Heart left ventricle (tissue), 16 donors: ENCODE measurements at regions of chr7 and their contacts with region 1.

Region 1: DNA sequence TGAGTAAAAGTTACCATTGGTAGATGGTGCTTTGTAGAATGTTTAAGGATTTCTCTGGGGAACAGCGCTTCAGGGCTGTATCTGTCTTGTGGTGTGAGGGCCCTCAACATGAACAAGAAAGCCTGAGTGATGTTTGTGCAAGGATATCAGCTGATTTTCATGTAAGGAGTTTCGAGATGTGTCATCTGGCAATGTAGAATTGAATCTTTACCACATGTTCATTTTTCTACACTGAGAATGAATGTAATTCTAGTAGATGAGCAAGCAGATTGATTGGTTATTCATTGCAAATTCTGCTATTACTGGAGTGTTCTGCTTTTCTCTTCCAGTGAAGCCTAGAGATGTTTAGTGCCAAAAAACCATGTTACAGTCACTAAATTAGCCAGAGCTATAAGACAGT is 87.7 kb downstream of the ST7 start:
- DNase-seq: no peak
- ATAC-seq: no peak
- H3K4me3 ChIP-seq: no peak overlapping the region
- H3K27ac ChIP-seq: no peak overlapping the region
- H3K4me1 ChIP-seq: peaks cover 0 to 30% (median 15%) of the 10 kb centered on the region in 12 donors
- H3K27me3 ChIP-seq: no peaks in the 10 kb centered on the region
- CTCF ChIP-seq: no peak
- POLR2A ChIP-seq: no peak

Region 2: DNA sequence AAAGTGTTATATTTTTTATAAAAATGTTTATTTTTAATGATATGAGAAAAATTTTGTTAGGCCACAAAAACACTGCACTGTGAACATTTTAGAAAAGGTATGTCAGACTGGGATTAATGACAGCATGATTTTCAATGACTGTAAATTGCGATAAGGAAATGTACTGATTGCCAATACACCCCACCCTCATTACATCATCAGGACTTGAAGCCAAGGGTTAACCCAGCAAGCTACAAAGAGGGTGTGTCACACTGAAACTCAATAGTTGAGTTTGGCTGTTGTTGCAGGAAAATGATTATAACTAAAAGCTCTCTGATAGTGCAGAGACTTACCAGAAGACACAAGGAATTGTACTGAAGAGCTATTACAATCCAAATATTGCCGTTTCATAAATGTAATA is 243.4 kb before region 1 on chr7:
- intact Hi-C with region 1: no loop called
- DNase-seq: no peak
- ATAC-seq: peak in 3 of 4 donors; percentile 46 to 62 (median 46)
- H3K4me3 ChIP-seq: no peak overlapping the region
- H3K27ac ChIP-seq: peak overlapping the region in 1 of 12 donors; percentile 32
- H3K4me1 ChIP-seq: peaks cover 0 to 11% (median 0%) of the 10 kb centered on the region in 12 donors
- H3K27me3 ChIP-seq: no peaks in the 10 kb centered on the region
- CTCF ChIP-seq: no peak
- POLR2A ChIP-seq: no peak

Region 3: DNA sequence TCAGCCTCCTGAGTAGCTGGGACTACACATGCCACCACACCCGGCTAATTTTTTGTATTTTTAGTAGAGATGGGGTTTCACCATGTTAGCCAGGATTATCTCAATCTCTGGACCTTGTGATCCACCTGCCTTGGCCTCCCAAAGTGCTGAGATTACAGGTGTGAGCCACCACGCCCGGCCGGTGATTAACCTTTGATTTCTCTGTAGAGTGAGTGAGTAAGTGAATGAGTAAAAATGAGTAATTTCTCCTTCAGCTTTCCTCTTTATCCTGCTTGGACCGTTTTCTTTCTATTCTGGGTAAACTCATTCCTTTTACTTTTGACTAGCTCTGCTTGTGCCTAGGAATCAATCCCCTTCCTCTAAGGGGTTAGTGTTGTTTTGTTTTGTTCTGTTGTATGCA is 51.0 kb before region 1 on chr7:
- intact Hi-C with region 1: loop called in 1 of 10 experiments (anchors 5 kb)
- DNase-seq: no peak
- ATAC-seq: no peak
- H3K4me3 ChIP-seq: no peak overlapping the region
- H3K27ac ChIP-seq: no peak overlapping the region
- H3K4me1 ChIP-seq: peaks cover 0 to 15% (median 0%) of the 10 kb centered on the region in 12 donors
- H3K27me3 ChIP-seq: no peaks in the 10 kb centered on the region
- CTCF ChIP-seq: no peak
- POLR2A ChIP-seq: no peak